Heart left ventricle (tissue), 16 donors: ENCODE measurements at regions of chr14 and their contacts with region 1.

Region 1: GRCh38 chr14:70359181-70360090 is at the start of gene COX16:
- DNase-seq: peak; percentile 82 to 87 (median 85)
- ATAC-seq: peak; percentile 98 to 99 (median 99)
- H3K4me3 ChIP-seq: peak within 1 kb of the TSS; percentile 54 to 95 (median 80)
- H3K27ac ChIP-seq: peak within 1 kb of the TSS; percentile 13 to 93 (median 88)
- H3K4me1 ChIP-seq: peaks cover 0 to 37% (median 21%) of the 10 kb centered on the region in 12 donors
- H3K27me3 ChIP-seq: no peaks in the 10 kb centered on the region
- CTCF ChIP-seq: no peak
- POLR2A ChIP-seq: no peak
- total RNA-seq, gene COX16: 14.3 to 50.4 (median 38.5) TPM

Region 2: DNA sequence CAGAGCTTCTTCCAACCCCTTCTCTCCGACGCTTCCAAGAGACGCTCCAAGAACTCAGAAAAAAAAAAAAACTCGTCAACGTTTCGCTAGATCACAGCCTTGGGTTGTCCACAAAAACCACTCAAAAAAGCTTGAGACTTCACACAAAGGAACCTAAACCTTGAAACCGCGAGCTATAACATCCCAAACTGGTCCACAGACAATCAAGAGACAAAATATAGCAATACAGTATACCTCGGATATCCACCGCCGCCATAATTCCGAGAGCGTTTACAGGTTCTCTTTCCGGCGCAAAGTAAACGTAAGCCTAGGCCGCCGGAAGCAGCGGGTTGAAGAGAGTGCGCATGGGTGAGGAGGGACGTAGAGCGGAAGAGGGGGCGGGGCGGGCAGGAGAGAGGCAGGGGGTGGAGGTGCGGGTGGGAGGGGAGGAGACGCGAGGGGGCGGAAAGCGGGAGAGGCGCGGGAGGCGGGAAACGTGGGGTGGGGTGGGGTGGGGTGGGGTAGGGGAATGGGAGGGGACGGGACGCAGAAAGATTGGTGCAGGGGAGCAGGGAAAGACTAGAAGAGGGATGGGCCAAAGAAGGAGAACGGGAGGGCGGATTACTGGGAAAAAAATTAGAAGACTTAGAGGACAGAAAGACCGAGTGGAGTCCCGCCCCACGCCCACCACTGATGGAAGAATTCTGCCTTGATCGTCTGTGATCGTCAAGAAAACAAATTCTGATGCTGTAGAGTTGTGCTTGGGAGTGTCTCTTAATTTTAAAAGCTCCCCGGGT is 241.1 kb after region 1 on chr14 and contains the start of gene MED6:
- intact Hi-C with region 1: loop called in 1 of 10 experiments (anchors 10 kb)
- DNase-seq: peak; percentile 94 to 96 (median 95)
- ATAC-seq: peak; percentile 99 to 100 (median 100)
- H3K4me3 ChIP-seq: peak within 1 kb of the TSS; percentile 56 to 92 (median 84)
- H3K27ac ChIP-seq: peak within 1 kb of the TSS in 10 of 12 donors; percentile 27 to 79 (median 70)
- H3K4me1 ChIP-seq: peaks cover 0 to 26% (median 15%) of the 10 kb centered on the region in 12 donors
- H3K27me3 ChIP-seq: peaks cover 0 to 4% (median 0%) of the 10 kb centered on the region in 9 donors
- CTCF ChIP-seq: no peak
- POLR2A ChIP-seq: no peak
- total RNA-seq, gene MED6: 13.0 to 25.1 (median 19.7) TPM